CD8-positive, alpha-beta T cell (primary cell): ENCODE measurements at regions of chr3 and their contacts with region 1.

Region 1: GRCh38 chr3:40810813-40811212 is 286.1 kb downstream of the ZNF621 start:
- DNase-seq: no peak
- ATAC-seq: no peak
- H3K4me3 ChIP-seq: no peak overlapping the region
- H3K4me3 Mint-ChIP-seq: no peak overlapping the region
- H3K27ac ChIP-seq: no peak overlapping the region
- H3K27ac Mint-ChIP-seq: no peak overlapping the region
- H3K4me1 ChIP-seq: no peaks in the 10 kb centered on the region
- H3K4me1 Mint-ChIP-seq: no peaks in the 10 kb centered on the region
- H3K27me3 ChIP-seq: no peaks in the 10 kb centered on the region
- H3K27me3 Mint-ChIP-seq: no peaks in the 10 kb centered on the region
- CTCF ChIP-seq: no peak

Region 2: GRCh38 chr3:41274944-41275668 is 464.3 kb after region 1 on chr3:
- CTCF ChIA-PET with region 1: no interaction called
- POLR2A ChIA-PET with region 1: no interaction called
- intact Hi-C with region 1: loop called in 1 of 2 experiments (anchors 5 kb)
- DNase-seq: no peak
- ATAC-seq: no peak
- H3K4me3 ChIP-seq: no peak overlapping the region
- H3K4me3 Mint-ChIP-seq: no peak overlapping the region
- H3K27ac ChIP-seq: no peak overlapping the region
- H3K27ac Mint-ChIP-seq: no peak overlapping the region
- H3K4me1 ChIP-seq: no peaks in the 10 kb centered on the region
- H3K4me1 Mint-ChIP-seq: peaks cover 2% of the 10 kb centered on the region
- H3K27me3 ChIP-seq: no peaks in the 10 kb centered on the region
- H3K27me3 Mint-ChIP-seq: no peaks in the 10 kb centered on the region
- CTCF ChIP-seq: no peak